Left lung (tissue), 14 donors: ENCODE measurements at regions of chr10 and their contacts with region 1.

Region 1: DNA sequence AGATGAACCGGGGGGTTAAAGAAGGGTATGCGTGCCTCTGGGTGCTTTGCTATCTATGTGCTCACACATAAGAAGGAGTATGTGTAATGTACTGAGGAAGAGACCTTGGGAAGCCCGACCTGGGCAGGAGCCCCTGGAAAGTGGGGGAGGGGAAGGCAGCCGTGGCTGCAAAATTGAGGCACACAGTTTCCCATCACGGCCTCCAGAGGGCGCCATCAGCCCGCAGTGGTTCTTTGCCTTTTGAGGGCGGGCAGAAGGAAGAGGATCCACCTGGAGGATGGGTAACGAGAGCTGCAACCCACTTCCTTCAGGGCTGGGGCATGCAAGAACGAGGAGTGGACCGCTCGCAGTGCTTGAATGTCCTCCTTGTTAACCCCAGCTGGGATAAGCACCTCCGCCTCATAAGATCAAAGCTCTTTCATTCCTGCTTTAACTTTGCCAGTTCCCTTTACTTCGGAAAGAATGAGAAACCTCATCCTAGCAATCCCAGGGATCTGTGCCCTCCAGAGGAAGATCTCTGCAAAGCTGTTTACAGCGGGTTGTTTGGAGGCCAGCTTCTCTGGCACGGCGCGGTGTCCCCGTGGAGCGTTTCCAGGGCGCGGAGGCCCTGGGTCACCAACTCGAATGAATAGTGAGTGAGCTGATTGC is 77.9 kb downstream of the PCGF5 start:
- DNase-seq: peak; percentile 79 to 90 (median 84)
- ATAC-seq: peak; percentile 99
- H3K4me3 ChIP-seq: peak overlapping the region; percentile 27 to 33
- H3K27ac ChIP-seq: peak overlapping the region; percentile 7 to 27
- H3K4me1 ChIP-seq: peaks cover 0 to 11% of the 10 kb centered on the region in 2 donors
- H3K27me3 ChIP-seq: no peaks in the 10 kb centered on the region
- CTCF ChIP-seq: peak; percentile 79 to 86

Region 2: DNA sequence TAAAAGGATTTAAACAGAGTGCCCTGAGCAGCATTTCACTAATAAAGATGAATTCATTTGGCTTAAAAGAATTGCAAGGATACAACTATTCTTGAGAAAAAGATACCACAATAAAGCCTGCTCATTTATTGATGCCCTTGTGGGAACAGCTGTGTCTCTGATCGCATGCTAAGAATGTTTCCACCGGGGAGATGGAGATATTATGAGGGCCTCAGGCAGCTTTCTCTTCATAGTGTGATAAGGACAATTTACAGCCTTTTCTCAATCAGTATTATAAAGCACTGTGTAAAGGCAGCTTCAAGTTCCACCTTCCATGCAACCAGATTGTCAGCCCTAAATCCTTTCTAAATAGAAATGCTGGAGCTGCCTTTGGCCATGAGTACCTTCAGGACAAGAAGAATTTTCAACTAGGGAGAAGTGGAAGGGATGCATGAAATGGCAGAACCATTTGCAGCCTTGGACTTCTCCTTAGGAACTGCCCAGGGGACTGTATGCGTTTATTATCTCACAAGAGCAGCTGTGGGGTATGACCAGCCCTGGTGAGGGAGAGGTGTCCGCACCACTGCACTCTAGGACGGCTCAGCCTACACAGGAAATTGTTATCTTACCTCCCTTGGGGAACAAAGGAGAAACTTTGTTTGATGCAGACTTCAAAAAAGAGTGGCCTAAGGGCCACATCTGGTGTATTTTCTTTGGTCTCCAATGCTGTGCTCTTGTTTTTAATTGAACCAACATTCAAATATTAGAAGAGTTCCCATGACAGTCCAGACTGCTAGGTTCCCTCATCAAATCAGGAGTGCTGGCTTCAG is 194.8 kb before region 1 on chr10:
- intact Hi-C with region 1: no loop called
- DNase-seq: no peak
- ATAC-seq: no peak
- H3K4me3 ChIP-seq: no peak overlapping the region
- H3K27ac ChIP-seq: no peak overlapping the region
- H3K4me1 ChIP-seq: no peaks in the 10 kb centered on the region
- H3K27me3 ChIP-seq: no peaks in the 10 kb centered on the region
- CTCF ChIP-seq: no peak

Region 3: GRCh38 chr10:91360400-91360799 is 62.1 kb after region 1 on chr10:
- intact Hi-C with region 1: loop called in 1 of 2 experiments (anchors 5 kb)
- DNase-seq: no peak
- ATAC-seq: no peak
- H3K4me3 ChIP-seq: no peak overlapping the region
- H3K27ac ChIP-seq: no peak overlapping the region
- H3K4me1 ChIP-seq: no peaks in the 10 kb centered on the region
- H3K27me3 ChIP-seq: no peaks in the 10 kb centered on the region
- CTCF ChIP-seq: no peak